ENCODE measurements at regions of chr12 and their contacts with region 1.

Region 1: DNA sequence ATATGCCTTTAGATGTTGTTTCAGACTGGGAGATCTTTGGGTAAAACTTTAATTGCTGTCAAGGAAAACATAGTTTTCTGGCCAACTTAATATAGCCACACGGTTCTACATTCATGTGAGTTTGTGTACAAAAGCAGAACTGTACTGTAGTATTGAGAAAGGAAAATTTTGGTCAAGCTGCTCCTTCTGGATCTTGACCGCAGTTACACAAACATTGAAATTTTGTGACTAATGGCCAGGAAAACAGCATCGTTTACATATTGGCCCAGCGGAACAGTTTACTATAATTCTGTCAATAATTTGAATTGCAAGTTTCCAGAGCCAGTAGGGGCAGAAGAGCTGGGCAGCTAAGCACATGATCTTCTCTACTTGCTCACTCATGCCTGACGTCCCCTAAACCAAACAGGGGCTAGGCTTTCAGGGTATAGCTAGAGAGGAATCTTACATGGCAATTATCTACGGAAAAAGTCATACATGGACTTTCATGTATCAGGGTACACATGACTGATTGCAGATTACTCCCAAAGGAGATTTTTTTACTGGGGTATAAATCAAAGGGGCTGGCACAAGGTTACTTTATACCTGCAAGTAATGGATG is 11.4 kb upstream of the ART4 start:
- DNase-seq: no peak
- ATAC-seq: no peak
- H3K4me3 ChIP-seq: no peak overlapping the region
- H3K27ac ChIP-seq: no peak overlapping the region
- H3K4me1 ChIP-seq: no peaks in the 10 kb centered on the region
- H3K27me3 ChIP-seq: no peaks in the 10 kb centered on the region
- CTCF ChIP-seq: no peak

Region 2: DNA sequence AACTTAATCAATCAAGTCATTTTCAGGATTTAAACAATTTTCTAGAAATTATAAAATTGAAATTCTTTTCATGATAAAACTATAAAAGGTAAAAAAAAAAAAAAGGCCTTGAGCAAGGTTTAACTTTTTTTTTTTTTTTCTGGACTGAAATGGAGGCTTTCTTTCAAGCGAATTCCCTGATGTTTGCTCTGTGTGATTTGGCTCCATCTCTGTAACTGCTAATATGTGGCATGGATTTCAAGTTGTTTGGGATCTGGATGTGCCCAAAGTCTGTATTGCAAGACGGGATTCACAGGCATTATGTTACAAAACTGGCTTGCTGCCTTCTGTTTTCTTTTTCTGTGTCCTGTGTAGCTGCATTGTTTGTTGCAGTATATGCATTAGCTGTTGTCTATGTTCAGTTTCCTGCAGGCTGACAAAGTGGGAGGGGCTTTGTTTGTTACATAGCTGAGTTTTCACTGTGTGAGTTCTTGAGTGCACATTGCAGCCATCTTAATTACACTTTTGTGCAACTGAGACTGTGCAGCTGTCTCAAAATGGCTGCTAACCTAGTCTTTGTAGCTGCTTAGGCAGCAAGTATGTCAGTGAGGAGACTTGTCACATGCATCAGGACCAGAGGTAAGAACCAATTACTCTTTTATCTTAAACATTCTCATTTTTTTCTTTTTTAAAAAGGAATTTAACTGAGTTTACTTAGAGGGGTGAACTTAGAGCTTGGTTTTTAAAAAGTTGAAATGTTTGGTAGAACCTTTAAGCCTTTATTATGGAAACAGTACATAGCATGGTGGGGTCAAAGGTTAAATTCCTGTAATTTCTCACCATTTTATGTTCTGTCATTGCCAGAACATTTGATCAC is 469.7 kb before region 1 on chr12:
- intact Hi-C with region 1: no loop called
- DNase-seq: peak in 3 of 6 donors; percentile 62 to 81 (median 72)
- ATAC-seq: peak; percentile 95 to 98 (median 96)
- H3K4me3 ChIP-seq: peak overlapping the region in 2 of 4 donors; percentile 20 to 28
- H3K27ac ChIP-seq: peak overlapping the region; percentile 24 to 75 (median 58)
- H3K4me1 ChIP-seq: peaks cover 16 to 37% (median 17%) of the 10 kb centered on the region in 3 donors
- H3K27me3 ChIP-seq: no peaks in the 10 kb centered on the region
- CTCF ChIP-seq: no peak

Region 3: GRCh38 chr12:14691560-14691959 is 163.1 kb before region 1 on chr12:
- intact Hi-C with region 1: no loop called
- DNase-seq: peak in 4 of 6 donors; percentile 12 to 70 (median 19)
- ATAC-seq: peak in 3 of 4 donors; percentile 44 to 83 (median 74)
- H3K4me3 ChIP-seq: no peak overlapping the region
- H3K27ac ChIP-seq: no peak overlapping the region
- H3K4me1 ChIP-seq: no peaks in the 10 kb centered on the region
- H3K27me3 ChIP-seq: no peaks in the 10 kb centered on the region
- CTCF ChIP-seq: no peak

Region 4: GRCh38 chr12:14913381-14913781 is 58.7 kb after region 1 on chr12:
- intact Hi-C with region 1: no loop called
- DNase-seq: peak in 2 of 6 donors; percentile 27 to 28
- ATAC-seq: peak; percentile 61 to 81 (median 72)
- H3K4me3 ChIP-seq: no peak overlapping the region
- H3K27ac ChIP-seq: peak overlapping the region in 2 of 4 donors; percentile 42 to 51
- H3K4me1 ChIP-seq: no peaks in the 10 kb centered on the region
- H3K27me3 ChIP-seq: no peaks in the 10 kb centered on the region
- CTCF ChIP-seq: no peak

Region 5: DNA sequence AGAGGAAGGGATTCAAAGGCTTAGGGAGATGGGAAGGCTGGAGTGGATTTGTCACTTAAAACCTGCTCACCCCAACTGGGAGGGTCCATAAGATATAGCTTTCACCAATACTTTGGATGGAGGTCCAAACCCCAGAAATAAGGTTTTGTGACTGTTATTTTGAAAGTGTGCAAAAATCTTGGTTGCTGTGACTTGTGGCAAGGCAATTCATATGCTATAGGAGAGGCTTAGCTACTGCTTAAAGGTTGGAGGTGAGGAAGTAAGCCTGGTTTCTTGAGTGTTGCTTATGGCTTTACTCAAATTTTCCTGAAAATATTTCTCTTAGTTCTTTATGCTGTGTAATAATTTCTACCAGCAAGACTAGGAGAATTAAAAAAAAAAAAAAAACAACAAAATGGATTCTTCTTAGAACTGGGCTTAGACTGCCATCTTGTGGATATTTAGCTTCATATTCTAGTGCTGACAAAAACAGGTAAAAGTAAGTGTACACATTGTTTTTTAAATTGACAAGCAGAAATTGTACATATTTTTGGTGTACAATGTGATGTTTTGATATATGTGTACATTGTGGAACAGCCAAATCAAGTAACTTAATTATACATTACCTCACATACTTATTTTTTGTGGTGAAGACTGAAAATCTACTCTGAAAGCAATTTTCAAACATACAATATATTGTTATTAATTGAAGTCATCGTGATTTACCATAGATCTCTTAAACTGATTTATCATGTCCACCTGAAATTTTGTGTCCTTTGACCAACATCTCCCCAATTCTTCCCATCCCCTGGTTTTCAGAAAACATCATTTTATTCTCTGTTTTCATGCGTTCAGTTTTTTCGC is 141.1 kb after region 1 on chr12:
- intact Hi-C with region 1: loop called in 2 of 3 experiments (anchors 5 to 10 kb)
- DNase-seq: no peak
- ATAC-seq: peak; percentile 72 to 90 (median 86)
- H3K4me3 ChIP-seq: no peak overlapping the region
- H3K27ac ChIP-seq: no peak overlapping the region
- H3K4me1 ChIP-seq: peaks cover 0 to 5% (median 0%) of the 10 kb centered on the region in 3 donors
- H3K27me3 ChIP-seq: no peaks in the 10 kb centered on the region
- CTCF ChIP-seq: peak; percentile 28 to 53 (median 40)

Region 6: DNA sequence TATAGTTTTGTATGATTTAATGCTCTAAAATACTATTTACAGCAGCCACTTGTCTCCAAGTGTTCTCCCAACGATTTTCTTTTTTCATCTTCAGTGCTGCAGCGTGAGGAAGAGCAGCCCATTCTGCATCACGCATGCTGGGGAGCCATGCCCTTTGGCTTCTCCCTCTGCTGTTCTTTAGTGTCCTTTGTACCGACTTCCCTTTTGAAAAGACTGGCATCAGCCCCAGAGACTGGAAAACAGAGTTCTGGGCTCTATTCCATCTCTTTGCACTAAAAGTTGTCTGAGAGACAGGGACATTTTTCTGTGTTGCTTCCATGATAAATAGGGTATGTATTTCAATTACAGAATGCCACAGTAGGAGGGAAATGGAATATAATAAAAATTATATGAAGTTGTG is 261.4 kb after region 1 on chr12:
- intact Hi-C with region 1: no loop called
- DNase-seq: no peak
- ATAC-seq: peak in 2 of 4 donors; percentile 18 to 22
- H3K4me3 ChIP-seq: no peak overlapping the region
- H3K27ac ChIP-seq: no peak overlapping the region
- H3K4me1 ChIP-seq: no peaks in the 10 kb centered on the region
- H3K27me3 ChIP-seq: no peaks in the 10 kb centered on the region
- CTCF ChIP-seq: no peak